ENCODE measurements at regions of chr1 and their contacts with region 1.

Region 1: DNA sequence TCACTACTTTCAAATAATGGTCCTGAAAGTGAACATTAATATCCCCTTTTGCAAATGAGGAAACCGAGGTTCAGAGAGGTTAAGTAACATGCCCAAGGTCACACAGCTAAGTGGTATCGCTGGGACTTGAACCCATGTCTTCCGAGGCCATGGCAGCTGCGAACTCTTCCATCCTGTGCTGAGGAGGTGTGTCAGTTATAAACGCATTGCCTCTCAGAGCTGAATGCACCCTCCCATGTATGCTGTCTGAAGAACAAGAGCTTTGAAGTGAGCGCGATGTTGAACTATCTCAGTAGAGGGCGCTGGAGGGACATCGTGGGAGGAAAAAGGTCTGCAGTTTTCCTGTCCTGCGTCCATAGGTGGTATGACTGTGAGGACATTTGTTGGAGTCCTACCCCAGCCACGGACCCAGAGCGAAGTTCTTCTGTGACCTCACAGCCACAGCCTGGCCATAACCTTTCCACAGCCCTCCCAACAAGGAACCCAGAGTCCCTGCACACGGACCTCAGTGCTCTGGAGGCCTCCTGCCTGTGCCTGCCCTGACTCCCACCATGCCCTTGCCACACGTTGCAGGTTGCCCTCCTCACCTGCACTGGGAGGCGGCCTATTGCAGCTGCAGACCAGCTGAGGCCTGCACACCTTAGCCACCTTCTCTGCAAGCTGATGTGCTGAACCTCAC is 7.5 kb downstream of the MYOC start:
- DNase-seq: peak; percentile 34 to 80 (median 52)
- ATAC-seq: peak; percentile 93
- H3K4me3 ChIP-seq: no peak overlapping the region
- H3K4me3 Mint-ChIP-seq: no peak overlapping the region
- H3K27ac ChIP-seq: no peak overlapping the region
- H3K27ac Mint-ChIP-seq: no peak overlapping the region
- H3K4me1 ChIP-seq: peaks cover 6% of the 10 kb centered on the region
- H3K4me1 Mint-ChIP-seq: peaks cover 11% of the 10 kb centered on the region
- H3K27me3 ChIP-seq: no peaks in the 10 kb centered on the region
- H3K27me3 Mint-ChIP-seq: no peaks in the 10 kb centered on the region
- CTCF ChIP-seq: peak; percentile 51

Region 2: GRCh38 chr1:171545523-171545922 is 99.4 kb before region 1 on chr1:
- CTCF ChIA-PET with region 1: no interaction called
- POLR2A ChIA-PET with region 1: no interaction called
- intact Hi-C with region 1: no loop called
- DNase-seq: no peak
- ATAC-seq: no peak
- H3K4me3 ChIP-seq: no peak overlapping the region
- H3K4me3 Mint-ChIP-seq: no peak overlapping the region
- H3K27ac ChIP-seq: no peak overlapping the region
- H3K27ac Mint-ChIP-seq: no peak overlapping the region
- H3K4me1 ChIP-seq: no peaks in the 10 kb centered on the region
- H3K4me1 Mint-ChIP-seq: peaks cover 24% of the 10 kb centered on the region
- H3K27me3 ChIP-seq: no peaks in the 10 kb centered on the region
- H3K27me3 Mint-ChIP-seq: no peaks in the 10 kb centered on the region
- CTCF ChIP-seq: no peak

Region 3: GRCh38 chr1:171627020-171627419 is 17.9 kb before region 1 on chr1:
- CTCF ChIA-PET with region 1: no interaction called
- POLR2A ChIA-PET with region 1: no interaction called
- intact Hi-C with region 1: no loop called
- DNase-seq: no peak
- ATAC-seq: no peak
- H3K4me3 ChIP-seq: no peak overlapping the region
- H3K4me3 Mint-ChIP-seq: no peak overlapping the region
- H3K27ac ChIP-seq: no peak overlapping the region
- H3K27ac Mint-ChIP-seq: no peak overlapping the region
- H3K4me1 ChIP-seq: no peaks in the 10 kb centered on the region
- H3K4me1 Mint-ChIP-seq: no peaks in the 10 kb centered on the region
- H3K27me3 ChIP-seq: peaks cover 0 to 3% of the 10 kb centered on the region in 2 experiments
- H3K27me3 Mint-ChIP-seq: peaks cover 17% of the 10 kb centered on the region
- CTCF ChIP-seq: no peak

Region 4: GRCh38 chr1:171727778-171728177 is 82.8 kb after region 1 on chr1:
- CTCF ChIA-PET with region 1: no interaction called
- POLR2A ChIA-PET with region 1: no interaction called
- intact Hi-C with region 1: loop called in 1 of 2 experiments (anchors 10 kb)
- DNase-seq: no peak
- ATAC-seq: no peak
- H3K4me3 ChIP-seq: no peak overlapping the region
- H3K4me3 Mint-ChIP-seq: no peak overlapping the region
- H3K27ac ChIP-seq: no peak overlapping the region
- H3K27ac Mint-ChIP-seq: no peak overlapping the region
- H3K4me1 ChIP-seq: peaks cover 2% of the 10 kb centered on the region
- H3K4me1 Mint-ChIP-seq: peaks cover 43% of the 10 kb centered on the region
- H3K27me3 ChIP-seq: no peaks in the 10 kb centered on the region
- H3K27me3 Mint-ChIP-seq: no peaks in the 10 kb centered on the region
- CTCF ChIP-seq: no peak

Region 5: DNA sequence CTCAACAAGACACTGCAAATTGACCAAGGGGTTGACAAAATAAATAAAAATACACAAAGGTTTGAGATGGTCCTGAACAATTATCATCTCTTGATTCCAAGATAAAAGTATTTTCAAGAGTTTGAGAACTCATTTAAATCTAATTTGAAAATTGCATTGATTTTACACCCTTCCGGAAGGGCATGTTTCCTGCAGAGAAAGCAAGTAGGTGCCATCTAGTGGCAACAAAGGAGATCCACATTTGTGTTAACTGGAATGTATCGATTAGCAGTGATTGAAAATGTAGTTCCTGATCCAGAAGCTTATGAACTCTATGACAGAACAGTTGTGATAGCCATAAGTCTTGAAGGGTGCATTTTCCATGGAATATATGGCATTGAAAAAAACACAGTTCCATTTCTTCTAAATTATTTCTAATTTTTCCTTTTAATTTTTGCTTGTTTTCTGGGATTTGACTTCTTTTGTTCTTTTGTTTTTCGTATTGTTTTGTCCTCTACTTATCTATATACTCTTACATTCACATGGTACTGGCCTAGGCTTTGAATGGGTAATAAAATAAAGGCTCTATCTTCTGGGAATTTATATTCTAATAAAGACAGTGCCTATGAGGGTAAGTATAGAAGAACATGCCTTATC is 340.0 kb after region 1 on chr1:
- CTCF ChIA-PET with region 1: interaction called, 4 read pairs
- POLR2A ChIA-PET with region 1: no interaction called
- intact Hi-C with region 1: loop called (anchors 1 kb)
- DNase-seq: peak in 4 of 14 experiments; percentile 6 to 59 (median 58)
- ATAC-seq: peak; percentile 63
- H3K4me3 ChIP-seq: no peak overlapping the region
- H3K4me3 Mint-ChIP-seq: no peak overlapping the region
- H3K27ac ChIP-seq: no peak overlapping the region
- H3K27ac Mint-ChIP-seq: no peak overlapping the region
- H3K4me1 ChIP-seq: no peaks in the 10 kb centered on the region
- H3K4me1 Mint-ChIP-seq: no peaks in the 10 kb centered on the region
- H3K27me3 ChIP-seq: no peaks in the 10 kb centered on the region
- H3K27me3 Mint-ChIP-seq: no peaks in the 10 kb centered on the region
- CTCF ChIP-seq: peak; percentile 79

Measured in CD4-positive, alpha-beta T cell (primary cell).